PC-9 (cell line): ENCODE measurements at regions of chr2 and their contacts with region 1.

Region 1: GRCh38 chr2:121489284-121489683 is 41.4 kb upstream of the RNU4ATAC start:
- DNase-seq: peak; percentile 19 to 79
- H3K4me3 ChIP-seq: no peak overlapping the region; the same call in 1 of the 2 replicates
- H3K27ac ChIP-seq: no peak overlapping the region
- H3K4me1 ChIP-seq: peaks cover 42% of the 10 kb centered on the region
- H3K27me3 ChIP-seq: no peaks in the 10 kb centered on the region
- CTCF ChIP-seq: no peak

Region 2: DNA sequence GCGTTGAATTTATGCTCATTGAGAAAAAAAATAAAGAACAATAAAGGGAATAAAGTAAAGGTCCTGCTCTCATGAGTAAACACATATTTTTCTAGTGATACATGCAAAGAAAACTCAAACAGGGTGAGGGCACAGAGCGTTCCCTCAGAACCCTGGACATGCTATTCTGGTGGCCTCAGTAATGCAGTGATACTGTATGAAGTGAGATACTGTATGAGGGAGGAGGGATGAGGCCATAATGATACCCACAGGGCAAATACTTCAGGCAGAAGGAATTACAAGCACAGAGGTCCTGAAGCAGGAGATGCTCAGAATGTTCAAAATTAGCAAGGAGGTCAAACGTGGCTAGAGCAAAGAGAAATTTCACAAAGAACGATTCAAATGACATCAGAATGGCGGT is 13.0 kb after region 1 on chr2:
- CTCF ChIA-PET with region 1: interaction called, 11 read pairs
- POLR2A ChIA-PET with region 1: no interaction called
- intact Hi-C with region 1: no loop called
- DNase-seq: no peak
- H3K4me3 ChIP-seq: no peak overlapping the region
- H3K27ac ChIP-seq: no peak overlapping the region
- H3K4me1 ChIP-seq: 0 out of 2 replicates have a peak, but pooled peaks cover 9% of the 10 kb centered on the region
- H3K27me3 ChIP-seq: no peaks in the 10 kb centered on the region
- CTCF ChIP-seq: no peak